Naive thymus-derived CD4-positive, alpha-beta T cell (primary cell): ENCODE measurements at regions of chr2 and their contacts with region 1.

Region 1: DNA sequence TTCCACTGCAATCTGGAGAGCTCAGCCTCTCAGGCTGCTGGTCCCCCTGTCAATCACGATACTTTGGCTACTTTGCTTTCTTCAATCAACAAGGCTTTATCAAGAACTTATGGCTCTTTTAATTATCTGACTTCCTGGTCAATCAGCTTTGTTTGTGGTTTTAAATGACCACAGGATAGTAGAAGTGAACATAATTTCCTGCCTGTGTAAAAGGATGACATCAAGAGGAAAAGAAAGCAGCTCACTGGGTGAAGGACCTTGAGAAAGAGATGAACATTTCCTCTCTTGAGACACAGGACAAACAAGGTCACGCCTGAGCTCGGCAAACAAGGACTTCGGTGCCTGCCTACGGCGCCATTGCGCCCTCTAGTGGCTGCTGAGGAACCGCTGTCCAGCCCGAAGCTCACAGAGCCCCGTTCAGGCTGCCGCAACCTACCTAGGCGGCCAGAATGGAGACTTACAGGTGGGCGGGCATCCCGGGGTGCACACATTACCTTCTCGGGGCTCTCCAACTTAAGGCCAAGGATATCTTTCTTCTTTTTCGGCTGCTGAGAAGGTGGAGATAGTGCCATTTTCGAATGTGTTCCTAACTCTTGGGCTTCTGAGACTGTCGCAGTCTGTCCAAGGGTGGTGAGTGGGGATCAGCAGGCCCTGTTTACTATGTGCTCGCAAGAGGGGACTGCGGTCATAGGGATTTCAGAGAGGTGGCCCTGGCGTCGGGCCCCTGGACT is 54.0 kb downstream of the IL1RL2 start:
- DNase-seq: peak; percentile 55 to 88 (median 80)
- ATAC-seq: peak; percentile 95
- H3K4me3 ChIP-seq: no peak overlapping the region
- H3K4me3 Mint-ChIP-seq: peak overlapping the region in 5 of 10 donors; percentile 12 to 41 (median 18)
- H3K27ac ChIP-seq: no peak overlapping the region
- H3K27ac Mint-ChIP-seq: peak overlapping the region in 5 of 9 donors; percentile 25 to 72 (median 56)
- H3K4me1 ChIP-seq: peaks cover 7 to 10% of the 10 kb centered on the region in 2 donors
- H3K4me1 Mint-ChIP-seq: peaks cover 6 to 31% (median 9%) of the 10 kb centered on the region in 7 donors
- H3K27me3 ChIP-seq: peaks cover 0 to 3% of the 10 kb centered on the region in 2 donors
- H3K27me3 Mint-ChIP-seq: peaks cover 0 to 2% (median 0%) of the 10 kb centered on the region in 5 donors

Region 2: GRCh38 chr2:101341901-101342624 is 898.7 kb before region 1 on chr2:
- CTCF ChIA-PET with region 1: interaction called, 8 read pairs
- POLR2A ChIA-PET with region 1: no interaction called
- intact Hi-C with region 1: loop called in 1 of 2 experiments (anchors 2 kb)
- DNase-seq: peak; percentile 32 to 73 (median 51)
- ATAC-seq: peak; percentile 76
- H3K4me3 ChIP-seq: no peak overlapping the region
- H3K4me3 Mint-ChIP-seq: peak overlapping the region in 4 of 10 donors; percentile 10 to 63 (median 18)
- H3K27ac ChIP-seq: no peak overlapping the region
- H3K27ac Mint-ChIP-seq: peak overlapping the region in 5 of 9 donors; percentile 9 to 68 (median 31)
- H3K4me1 ChIP-seq: peaks cover 6 to 21% of the 10 kb centered on the region in 2 donors
- H3K4me1 Mint-ChIP-seq: peaks cover 24 to 43% (median 32%) of the 10 kb centered on the region in 7 donors
- H3K27me3 ChIP-seq: no peaks in the 10 kb centered on the region
- H3K27me3 Mint-ChIP-seq: peaks cover 0 to 20% (median 0%) of the 10 kb centered on the region in 5 donors

Region 3: GRCh38 chr2:101883863-101884262 is 356.9 kb before region 1 on chr2:
- CTCF ChIA-PET with region 1: interaction called, 11 read pairs
- POLR2A ChIA-PET with region 1: no interaction called
- intact Hi-C with region 1: loop called (anchors 1 kb)
- DNase-seq: peak in 5 of 9 donors; percentile 28 to 45 (median 36)
- ATAC-seq: peak; percentile 87
- H3K4me3 ChIP-seq: no peak overlapping the region
- H3K4me3 Mint-ChIP-seq: no peak overlapping the region
- H3K27ac ChIP-seq: no peak overlapping the region
- H3K27ac Mint-ChIP-seq: peak overlapping the region in 4 of 9 donors; percentile 38 to 62 (median 52)
- H3K4me1 ChIP-seq: no peaks in the 10 kb centered on the region
- H3K4me1 Mint-ChIP-seq: peaks cover 0 to 16% (median 5%) of the 10 kb centered on the region in 7 donors
- H3K27me3 ChIP-seq: no peaks in the 10 kb centered on the region
- H3K27me3 Mint-ChIP-seq: no peaks in the 10 kb centered on the region

Region 4: DNA sequence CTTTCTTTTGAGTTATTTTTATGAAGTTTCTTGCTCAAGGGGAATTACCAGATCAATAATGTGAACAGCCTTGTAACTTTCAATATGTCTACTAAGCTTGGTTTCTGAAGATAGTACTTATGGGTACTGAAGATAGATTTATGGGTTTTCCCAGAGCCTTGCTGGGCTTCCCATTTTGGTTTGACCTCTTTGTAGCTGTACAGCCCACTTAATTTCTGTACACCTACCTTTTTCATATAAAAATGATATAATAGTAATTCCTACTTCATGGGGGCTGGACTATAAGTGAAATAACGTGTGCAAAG is 226.8 kb before region 1 on chr2:
- CTCF ChIA-PET with region 1: interaction called, 12 read pairs
- POLR2A ChIA-PET with region 1: no interaction called
- intact Hi-C with region 1: no loop called
- DNase-seq: no peak
- ATAC-seq: no peak
- H3K4me3 ChIP-seq: no peak overlapping the region
- H3K4me3 Mint-ChIP-seq: no peak overlapping the region
- H3K27ac ChIP-seq: no peak overlapping the region
- H3K27ac Mint-ChIP-seq: no peak overlapping the region
- H3K4me1 ChIP-seq: no peaks in the 10 kb centered on the region
- H3K4me1 Mint-ChIP-seq: peaks cover 0 to 3% (median 0%) of the 10 kb centered on the region in 7 donors
- H3K27me3 ChIP-seq: no peaks in the 10 kb centered on the region
- H3K27me3 Mint-ChIP-seq: peaks cover 0 to 7% (median 5%) of the 10 kb centered on the region in 5 donors

Region 5: GRCh38 chr2:102033031-102033749 is 207.6 kb before region 1 on chr2:
- CTCF ChIA-PET with region 1: interaction called, 141 read pairs
- POLR2A ChIA-PET with region 1: no interaction called
- intact Hi-C with region 1: no loop called
- DNase-seq: peak in 5 of 9 donors; percentile 27 to 40 (median 30)
- ATAC-seq: peak; percentile 74
- H3K4me3 ChIP-seq: no peak overlapping the region
- H3K4me3 Mint-ChIP-seq: peak overlapping the region; percentile 47 to 75 (median 66)
- H3K27ac ChIP-seq: no peak overlapping the region
- H3K27ac Mint-ChIP-seq: peak overlapping the region; percentile 62 to 90 (median 79)
- H3K4me1 ChIP-seq: peaks cover 4 to 24% of the 10 kb centered on the region in 2 donors
- H3K4me1 Mint-ChIP-seq: peaks cover 25 to 40% (median 34%) of the 10 kb centered on the region in 7 donors
- H3K27me3 ChIP-seq: no peaks in the 10 kb centered on the region
- H3K27me3 Mint-ChIP-seq: no peaks in the 10 kb centered on the region

Region 6: GRCh38 chr2:102114290-102114721 is 126.5 kb before region 1 on chr2:
- CTCF ChIA-PET with region 1: no interaction called
- POLR2A ChIA-PET with region 1: no interaction called
- intact Hi-C with region 1: no loop called
- DNase-seq: no peak
- ATAC-seq: no peak
- H3K4me3 ChIP-seq: no peak overlapping the region
- H3K4me3 Mint-ChIP-seq: no peak overlapping the region
- H3K27ac ChIP-seq: no peak overlapping the region
- H3K27ac Mint-ChIP-seq: no peak overlapping the region
- H3K4me1 ChIP-seq: no peaks in the 10 kb centered on the region
- H3K4me1 Mint-ChIP-seq: peaks cover 0 to 8% (median 0%) of the 10 kb centered on the region in 7 donors
- H3K27me3 ChIP-seq: no peaks in the 10 kb centered on the region
- H3K27me3 Mint-ChIP-seq: peaks cover 0 to 10% (median 0%) of the 10 kb centered on the region in 5 donors

Region 7: DNA sequence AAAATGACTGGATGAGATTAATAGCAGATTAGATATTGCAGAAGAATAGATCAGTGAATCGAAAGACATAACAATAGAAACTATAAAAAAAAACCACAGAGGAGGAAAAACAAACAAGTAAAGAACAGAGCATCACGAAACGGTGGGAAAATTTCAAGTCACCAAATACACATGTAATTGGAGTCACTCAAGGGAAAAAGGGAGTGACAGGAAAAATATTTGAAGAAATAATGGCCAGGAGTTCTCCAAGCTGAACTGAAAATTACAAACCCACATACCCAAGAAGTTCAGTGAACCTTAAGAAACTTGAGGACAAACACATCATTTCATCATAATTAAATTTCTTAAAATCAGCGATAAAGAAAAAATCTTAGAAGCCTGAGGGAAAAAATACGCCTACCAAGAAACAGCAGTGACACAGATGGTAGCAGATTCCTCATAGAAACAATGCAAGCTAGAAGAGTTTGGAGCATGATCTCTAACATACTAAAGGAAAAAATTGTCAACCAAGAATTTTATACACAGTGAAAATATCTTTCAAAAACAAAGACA is 109.2 kb before region 1 on chr2:
- CTCF ChIA-PET with region 1: no interaction called
- POLR2A ChIA-PET with region 1: no interaction called
- intact Hi-C with region 1: no loop called
- DNase-seq: no peak
- ATAC-seq: no peak
- H3K4me3 ChIP-seq: no peak overlapping the region
- H3K4me3 Mint-ChIP-seq: no peak overlapping the region
- H3K27ac ChIP-seq: no peak overlapping the region
- H3K27ac Mint-ChIP-seq: no peak overlapping the region
- H3K4me1 ChIP-seq: no peaks in the 10 kb centered on the region
- H3K4me1 Mint-ChIP-seq: peaks cover 0 to 5% (median 1%) of the 10 kb centered on the region in 7 donors
- H3K27me3 ChIP-seq: no peaks in the 10 kb centered on the region
- H3K27me3 Mint-ChIP-seq: peaks cover 0 to 14% (median 4%) of the 10 kb centered on the region in 5 donors

Region 8: DNA sequence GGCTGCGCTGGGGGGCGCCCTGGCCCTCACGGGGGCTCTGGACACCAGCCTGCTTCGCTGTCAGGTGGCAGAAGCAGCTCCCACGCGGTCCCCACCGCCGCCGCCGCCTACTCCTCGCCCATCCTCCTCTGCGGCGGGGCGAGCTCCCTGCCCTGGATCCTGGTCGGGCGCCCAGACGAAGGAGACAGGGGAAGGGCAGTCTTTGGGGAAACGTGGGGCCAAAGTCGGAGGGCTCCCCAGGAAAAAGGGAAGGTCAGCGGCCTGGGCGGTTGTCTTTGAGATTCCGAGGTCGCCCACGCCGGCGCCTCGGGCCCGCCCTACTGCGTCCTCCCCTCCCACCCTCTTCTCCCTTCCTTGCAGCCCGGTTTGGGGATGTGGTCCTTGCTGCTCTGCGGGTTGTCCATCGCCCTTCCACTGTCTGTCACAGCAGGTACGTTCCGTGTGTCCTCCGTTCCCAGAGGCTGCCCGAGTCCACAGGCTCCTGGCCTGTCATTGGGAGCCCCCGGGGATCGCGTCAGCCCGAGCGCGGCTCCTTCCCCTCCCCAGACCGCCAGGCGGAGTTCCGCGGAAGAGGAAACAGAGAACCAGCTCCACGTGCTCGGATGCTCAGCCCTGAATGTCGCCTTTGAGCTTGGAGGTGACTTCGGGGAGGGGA is 53.2 kb before region 1 on chr2:
- CTCF ChIA-PET with region 1: interaction called, 6 read pairs
- POLR2A ChIA-PET with region 1: no interaction called
- intact Hi-C with region 1: loop called (anchors 1 to 2 kb)
- DNase-seq: peak; percentile 2 to 35 (median 25)
- ATAC-seq: peak; percentile 89
- H3K4me3 ChIP-seq: peak overlapping the region; percentile 54
- H3K4me3 Mint-ChIP-seq: peak overlapping the region; percentile 75 to 89 (median 87)
- H3K27ac ChIP-seq: no peak overlapping the region
- H3K27ac Mint-ChIP-seq: peak overlapping the region in 2 of 9 donors; percentile 26 to 65
- H3K4me1 ChIP-seq: no peaks in the 10 kb centered on the region
- H3K4me1 Mint-ChIP-seq: peaks cover 4 to 22% (median 8%) of the 10 kb centered on the region in 7 donors
- H3K27me3 ChIP-seq: no peaks in the 10 kb centered on the region
- H3K27me3 Mint-ChIP-seq: peaks cover 11 to 43% (median 20%) of the 10 kb centered on the region in 5 donors

Region 9: DNA sequence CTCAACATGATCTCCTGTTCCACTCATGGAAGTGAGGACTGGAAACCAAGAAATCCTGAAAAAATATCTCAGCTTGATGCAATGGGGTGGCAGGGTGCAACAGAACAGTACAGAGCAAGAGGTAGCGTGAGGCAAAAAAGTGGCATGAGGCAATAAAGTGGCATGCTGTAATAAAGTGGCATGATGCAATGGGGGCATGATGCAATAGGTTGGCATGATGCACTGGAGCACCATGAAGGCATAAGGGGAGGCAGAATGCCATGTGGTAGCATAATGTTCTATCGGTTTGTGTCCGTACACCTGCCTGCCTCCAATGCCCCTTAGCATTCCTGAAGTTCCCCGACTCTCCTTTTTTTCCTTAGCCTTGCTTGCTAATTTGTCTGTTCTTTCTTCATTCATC is 1169.4 kb after region 1 on chr2:
- CTCF ChIA-PET with region 1: no interaction called
- POLR2A ChIA-PET with region 1: no interaction called
- intact Hi-C with region 1: no loop called
- DNase-seq: no peak
- ATAC-seq: no peak
- H3K4me3 ChIP-seq: no peak overlapping the region
- H3K4me3 Mint-ChIP-seq: no peak overlapping the region
- H3K27ac ChIP-seq: no peak overlapping the region
- H3K27ac Mint-ChIP-seq: no peak overlapping the region
- H3K4me1 ChIP-seq: no peaks in the 10 kb centered on the region
- H3K4me1 Mint-ChIP-seq: no peaks in the 10 kb centered on the region
- H3K27me3 ChIP-seq: no peaks in the 10 kb centered on the region
- H3K27me3 Mint-ChIP-seq: no peaks in the 10 kb centered on the region